Endothelial cell of umbilical vein (primary cell): ENCODE measurements at regions of chr2 and their contacts with region 1.

Region 1: GRCh38 chr2:178112202-178113152 is at the start of gene RBM45:
- DNase-seq: peak; percentile 84
- H3K4me3 ChIP-seq: peak within 1 kb of the TSS; percentile 76 to 84 (median 76)
- H3K27ac ChIP-seq: no peak within 1 kb of the TSS
- H3K4me1 ChIP-seq: peaks cover 6% of the 10 kb centered on the region
- H3K27me3 ChIP-seq: no peaks in the 10 kb centered on the region
- CTCF ChIP-seq: peak; percentile 98 to 100
- POLR2A ChIP-seq: peak; percentile 92
- total RNA-seq, gene RBM45: 11.2 and 12.4 TPM in 2 replicates

Region 2: GRCh38 chr2:177983183-177983788 is 129.2 kb before region 1 on chr2:
- CTCF ChIA-PET with region 1: no interaction called
- POLR2A ChIA-PET with region 1: no interaction called
- dilution Hi-C with region 1: no loop called
- intact Hi-C with region 1: loop called (anchors 2 kb)
- DNase-seq: peak; percentile 53
- H3K4me3 ChIP-seq: no peak overlapping the region
- H3K27ac ChIP-seq: no peak overlapping the region
- H3K4me1 ChIP-seq: no peaks in the 10 kb centered on the region
- H3K27me3 ChIP-seq: peaks cover 2 to 3% of the 10 kb centered on the region in 2 experiments
- CTCF ChIP-seq: peak; percentile 72 to 84
- POLR2A ChIP-seq: no peak

Region 3: GRCh38 chr2:178193823-178194599 is 81.5 kb after region 1 on chr2 and contains the start of gene OSBPL6:
- CTCF ChIA-PET with region 1: no interaction called
- POLR2A ChIA-PET with region 1: no interaction called
- dilution Hi-C with region 1: no loop called
- intact Hi-C with region 1: loop called (anchors 1 kb)
- DNase-seq: peak; percentile 88
- H3K4me3 ChIP-seq: peak within 1 kb of the TSS; percentile 48 to 79 (median 73)
- H3K27ac ChIP-seq: no peak within 1 kb of the TSS
- H3K4me1 ChIP-seq: peaks cover 8% of the 10 kb centered on the region
- H3K27me3 ChIP-seq: peaks cover 11% of the 10 kb centered on the region in 2 experiments
- CTCF ChIP-seq: peak in 1 of 2 donors; percentile 22
- POLR2A ChIP-seq: peak; percentile 51
- total RNA-seq, gene OSBPL6: 2.3 TPM in 2 replicates

Region 4: DNA sequence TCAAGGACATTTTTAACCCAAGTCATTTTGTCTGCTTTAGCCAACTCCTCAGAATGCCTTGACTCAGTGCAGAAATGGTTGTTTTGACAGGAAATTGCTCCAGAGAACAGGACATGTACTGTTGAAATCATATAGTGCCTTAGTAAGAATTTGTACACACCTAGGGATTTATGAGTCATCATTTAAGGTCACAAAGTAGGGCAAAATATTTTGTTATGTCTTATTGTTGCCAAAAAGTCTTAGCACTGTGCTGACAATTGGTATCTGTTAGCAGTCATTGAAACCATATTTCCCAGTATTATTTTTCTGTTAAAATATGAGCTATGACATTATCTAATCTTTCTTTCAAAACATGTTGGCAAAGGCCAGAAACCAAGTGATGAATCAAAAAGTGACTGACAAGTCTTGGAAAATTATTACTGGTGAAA is 186.3 kb after region 1 on chr2:
- CTCF ChIA-PET with region 1: interaction called, 4 read pairs
- POLR2A ChIA-PET with region 1: no interaction called
- dilution Hi-C with region 1: no loop called
- intact Hi-C with region 1: loop called (anchors 5 kb)
- DNase-seq: peak; percentile 93
- H3K4me3 ChIP-seq: no peak overlapping the region
- H3K27ac ChIP-seq: peak overlapping the region; percentile 37
- H3K4me1 ChIP-seq: peaks cover 29% of the 10 kb centered on the region
- H3K27me3 ChIP-seq: no peaks in the 10 kb centered on the region
- CTCF ChIP-seq: no peak
- POLR2A ChIP-seq: no peak

Region 5: DNA sequence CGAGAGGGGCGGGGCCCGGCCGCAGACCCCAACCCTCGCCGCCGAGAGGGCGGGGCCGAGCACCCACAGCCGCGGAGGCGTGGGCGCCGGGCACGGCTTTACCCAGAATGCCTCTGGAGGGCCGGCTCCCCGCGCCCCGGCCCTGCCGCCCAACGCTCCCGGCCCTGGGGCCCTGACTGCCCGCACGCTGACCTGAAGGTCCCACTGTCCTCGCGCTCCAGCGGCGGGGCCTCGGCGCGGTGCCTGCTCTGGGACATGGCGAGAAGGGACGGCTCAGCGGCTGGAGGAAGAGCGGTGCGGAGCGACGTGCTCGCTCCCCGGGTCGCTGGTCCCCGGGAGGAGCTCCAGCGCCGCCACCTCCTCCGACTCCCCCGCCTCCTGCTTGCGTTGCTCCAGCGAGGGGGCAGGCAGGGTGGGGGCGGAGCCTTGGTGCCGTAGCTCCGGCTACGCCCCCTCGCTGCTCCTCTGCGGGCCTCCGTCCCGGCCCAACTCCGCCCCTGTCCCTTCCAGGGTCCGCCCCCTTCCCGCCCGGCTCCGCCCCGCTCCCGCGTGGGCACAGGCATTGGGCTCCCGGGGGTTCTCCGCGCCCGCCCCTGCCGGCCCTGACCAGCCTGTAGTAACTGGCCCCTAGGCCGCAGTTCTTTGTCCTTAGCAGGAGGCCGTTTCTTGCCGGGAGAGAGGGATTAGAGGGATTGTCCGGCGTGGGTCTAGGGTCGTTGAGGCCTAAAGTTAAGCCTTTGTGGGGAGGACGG is 338.5 kb after region 1 on chr2 and contains the starts of genes PJVK and PRKRA:
- CTCF ChIA-PET with region 1: interaction called, 4 read pairs
- POLR2A ChIA-PET with region 1: interaction called, 3 read pairs
- dilution Hi-C with region 1: no loop called
- intact Hi-C with region 1: loop called (anchors 1 kb)
- DNase-seq: peak; percentile 99
- H3K4me3 ChIP-seq: peak within 1 kb of the TSS; percentile 65 to 94 (median 75)
- H3K27ac ChIP-seq: peak within 1 kb of the TSS; percentile 94
- H3K4me1 ChIP-seq: peaks cover 15% of the 10 kb centered on the region
- H3K27me3 ChIP-seq: no peaks in the 10 kb centered on the region
- CTCF ChIP-seq: no peak
- POLR2A ChIP-seq: peak; percentile 96
- total RNA-seq, gene PJVK: 1.4 and 1.8 TPM in 2 replicates
- total RNA-seq, gene PRKRA: 42.4 and 46.6 TPM in 2 replicates

Region 6: GRCh38 chr2:178522950-178523595 is 410.6 kb after region 1 on chr2:
- CTCF ChIA-PET with region 1: interaction called, 4 read pairs
- POLR2A ChIA-PET with region 1: no interaction called
- dilution Hi-C with region 1: no loop called
- intact Hi-C with region 1: loop called (anchors 2 kb)
- DNase-seq: peak; percentile 83
- H3K4me3 ChIP-seq: peak overlapping the region; percentile 17 to 77 (median 39)
- H3K27ac ChIP-seq: peak overlapping the region; percentile 36
- H3K4me1 ChIP-seq: peaks cover 4% of the 10 kb centered on the region
- H3K27me3 ChIP-seq: no peaks in the 10 kb centered on the region
- CTCF ChIP-seq: peak; percentile 79 to 85
- POLR2A ChIP-seq: peak; percentile 73